Thyroid gland (tissue), 4 donors: ENCODE measurements at regions of chr11 and their contacts with region 1.

Region 1: DNA sequence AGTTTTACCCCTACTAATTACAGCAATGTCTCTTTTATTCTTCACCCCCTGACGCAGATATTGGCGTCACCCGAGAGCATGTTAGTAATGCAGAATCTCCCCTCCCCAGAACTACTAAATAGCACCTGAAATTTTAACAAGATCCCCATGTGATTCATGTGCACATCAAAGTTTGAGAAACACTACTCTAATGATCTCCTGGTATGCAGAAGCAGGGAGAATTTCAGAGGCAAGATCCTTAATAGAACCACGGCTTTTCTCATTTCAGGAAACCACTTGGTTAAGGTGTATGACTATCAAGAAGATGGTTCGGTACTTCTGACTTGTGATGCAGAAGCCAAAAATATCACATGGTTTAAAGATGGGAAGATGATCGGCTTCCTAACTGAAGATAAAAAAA is 5.3 kb downstream of the CD3G start:
- DNase-seq: no peak
- H3K4me3 ChIP-seq: no peak overlapping the region
- H3K27ac ChIP-seq: no peak overlapping the region
- H3K4me1 ChIP-seq: no peaks in the 10 kb centered on the region
- H3K27me3 ChIP-seq: no peaks in the 10 kb centered on the region
- CTCF ChIP-seq: no peak
- POLR2A ChIP-seq: no peak

Region 2: GRCh38 chr11:117946842-117947526 is 402.5 kb before region 1 on chr11:
- intact Hi-C with region 1: no loop called
- DNase-seq: peak; percentile 87 to 89
- H3K4me3 ChIP-seq: no peak overlapping the region
- H3K27ac ChIP-seq: no peak overlapping the region
- H3K4me1 ChIP-seq: peaks cover 12 to 18% of the 10 kb centered on the region in 2 donors
- H3K27me3 ChIP-seq: no peaks in the 10 kb centered on the region
- CTCF ChIP-seq: peak; percentile 92 to 98 (median 96)
- POLR2A ChIP-seq: no peak

Region 3: DNA sequence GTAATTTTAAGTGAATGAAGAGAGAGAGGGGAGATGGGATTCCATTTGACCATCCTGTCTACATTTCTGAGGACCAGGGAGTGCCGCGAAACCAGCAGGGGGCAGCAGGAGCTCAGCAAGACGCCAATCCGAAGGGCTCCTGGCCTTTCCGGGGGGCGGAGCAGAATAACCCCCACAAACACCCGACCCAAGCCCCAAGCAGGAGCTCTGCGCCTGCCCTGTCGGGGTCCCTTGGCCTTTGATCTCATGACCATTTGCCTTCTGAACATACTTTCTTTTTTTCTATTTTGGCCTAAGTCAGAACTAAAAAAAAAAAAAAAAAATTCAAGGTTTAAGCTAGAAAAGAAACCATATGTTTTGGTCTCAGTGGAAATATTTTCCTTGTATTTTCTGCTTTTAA is 151.1 kb before region 1 on chr11:
- intact Hi-C with region 1: loop called (anchors 5 kb)
- DNase-seq: peak; percentile 78 to 80
- H3K4me3 ChIP-seq: no peak overlapping the region
- H3K27ac ChIP-seq: no peak overlapping the region
- H3K4me1 ChIP-seq: peaks cover 0 to 8% of the 10 kb centered on the region in 2 donors
- H3K27me3 ChIP-seq: no peaks in the 10 kb centered on the region
- CTCF ChIP-seq: peak; percentile 50 to 94 (median 82)
- POLR2A ChIP-seq: no peak

Region 4: DNA sequence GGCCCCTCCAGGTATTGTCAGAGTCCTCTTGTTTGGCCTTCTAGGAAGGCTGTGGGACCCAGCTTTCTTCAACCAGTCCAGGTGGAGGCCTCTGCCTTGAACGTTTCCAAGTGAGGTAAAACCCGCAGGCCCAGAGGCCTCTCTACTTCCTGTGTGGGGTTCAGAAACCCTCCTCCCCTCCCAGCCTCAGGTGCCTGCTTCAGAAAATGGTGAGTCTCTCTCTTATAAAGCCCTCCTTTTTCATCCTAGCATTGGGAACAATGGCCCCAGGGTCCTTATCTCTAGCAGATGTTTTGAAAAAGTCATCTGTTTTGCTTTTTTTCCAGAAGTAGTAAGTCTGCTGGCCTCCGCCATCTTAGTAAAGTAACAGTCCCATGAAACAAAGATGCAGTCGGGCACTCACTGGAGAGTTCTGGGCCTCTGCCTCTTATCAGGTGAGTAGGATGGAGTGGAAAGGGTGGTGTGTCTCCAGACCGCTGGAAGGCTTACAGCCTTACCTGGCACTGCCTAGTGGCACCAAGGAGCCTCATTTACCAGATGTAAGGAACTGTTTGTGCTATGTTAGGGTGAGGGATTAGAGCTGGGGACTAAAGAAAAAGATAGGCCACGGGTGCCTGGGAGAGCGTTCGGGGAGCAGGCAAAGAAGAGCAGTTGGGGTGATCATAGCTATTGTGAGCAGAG is 44.8 kb before region 1 on chr11 and contains the start of gene CD3E:
- intact Hi-C with region 1: loop called (anchors 5 kb)
- DNase-seq: no peak
- H3K4me3 ChIP-seq: no peak within 1 kb of the TSS
- H3K27ac ChIP-seq: no peak within 1 kb of the TSS
- H3K4me1 ChIP-seq: no peaks in the 10 kb centered on the region
- H3K27me3 ChIP-seq: no peaks in the 10 kb centered on the region
- CTCF ChIP-seq: no peak
- POLR2A ChIP-seq: no peak
- total RNA-seq, gene CD3E: 3.0 to 4.3 (median 3.3) TPM

Region 5: DNA sequence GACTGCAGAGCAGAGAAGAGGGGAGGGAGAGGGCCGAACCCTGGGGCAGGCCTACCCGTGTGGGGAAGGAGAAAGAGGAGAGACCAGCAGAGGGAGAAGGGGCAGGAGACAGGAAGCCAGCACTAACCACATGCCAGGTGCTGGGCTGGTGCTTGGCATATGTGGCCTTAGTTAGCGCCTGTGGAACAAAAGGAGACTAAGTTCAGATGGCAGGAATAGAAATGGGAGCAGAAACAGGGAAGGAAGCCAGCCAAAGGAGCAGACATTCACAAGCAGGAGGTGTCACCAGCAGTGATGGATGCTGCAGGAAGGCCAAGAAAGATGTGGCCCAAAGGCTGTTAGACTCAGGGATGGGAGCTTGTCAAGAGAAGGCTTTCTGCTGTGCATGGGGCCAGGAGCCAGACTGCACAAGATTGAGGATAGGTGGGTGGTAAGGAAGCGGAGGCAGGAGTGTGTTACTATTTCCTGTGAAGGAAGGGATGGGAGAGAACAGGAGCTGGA is 303.3 kb after region 1 on chr11:
- intact Hi-C with region 1: no loop called
- DNase-seq: no peak
- H3K4me3 ChIP-seq: no peak overlapping the region
- H3K27ac ChIP-seq: no peak overlapping the region
- H3K4me1 ChIP-seq: no peaks in the 10 kb centered on the region
- H3K27me3 ChIP-seq: no peaks in the 10 kb centered on the region
- CTCF ChIP-seq: no peak
- POLR2A ChIP-seq: no peak